Panc1 (cell line): ENCODE measurements at regions of chr5 and their contacts with region 1.

Region 1: GRCh38 chr5:79547429-79547822 is 33.5 kb upstream of the HOMER1 start:
- DNase-seq: no peak
- ATAC-seq: no peak
- H3K4me3 ChIP-seq: no peak overlapping the region
- H3K27ac ChIP-seq: no peak overlapping the region
- H3K4me1 ChIP-seq: no peaks in the 10 kb centered on the region
- H3K27me3 ChIP-seq: no peaks in the 10 kb centered on the region
- CTCF ChIP-seq: no peak

Region 2: GRCh38 chr5:79573983-79574890 is 26.8 kb after region 1 on chr5:
- CTCF ChIA-PET with region 1: no interaction called
- POLR2A ChIA-PET with region 1: no interaction called
- in situ Hi-C with region 1: no loop called
- intact Hi-C with region 1: no loop called
- DNase-seq: no peak
- ATAC-seq: no peak
- H3K4me3 ChIP-seq: no peak overlapping the region
- H3K27ac ChIP-seq: no peak overlapping the region
- H3K4me1 ChIP-seq: no peaks in the 10 kb centered on the region
- H3K27me3 ChIP-seq: no peaks in the 10 kb centered on the region
- CTCF ChIP-seq: no peak

Region 3: DNA sequence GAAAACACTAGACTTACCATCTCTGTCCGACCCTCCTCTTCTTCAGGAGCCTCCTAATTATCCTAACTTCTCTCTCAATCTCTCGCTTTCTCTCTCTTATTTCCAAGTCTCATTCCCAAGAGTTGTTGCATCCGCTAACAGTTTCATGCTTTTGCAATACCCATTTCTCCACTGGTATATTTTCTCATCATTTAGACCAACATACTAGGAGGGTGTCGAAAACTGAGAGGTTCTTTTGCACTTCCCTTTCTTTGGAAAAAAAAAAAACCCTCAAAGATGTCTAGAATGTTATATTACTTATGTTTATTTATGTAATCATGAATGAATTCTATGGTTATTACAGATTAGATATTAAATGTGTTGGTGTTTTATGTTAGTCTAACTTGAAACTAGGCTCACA is 808.3 kb after region 1 on chr5:
- CTCF ChIA-PET with region 1: no interaction called
- POLR2A ChIA-PET with region 1: interaction called, 23 read pairs
- in situ Hi-C with region 1: no loop called
- intact Hi-C with region 1: no loop called
- DNase-seq: no peak
- ATAC-seq: no peak
- H3K4me3 ChIP-seq: no peak overlapping the region
- H3K27ac ChIP-seq: no peak overlapping the region
- H3K4me1 ChIP-seq: no peaks in the 10 kb centered on the region
- H3K27me3 ChIP-seq: no peaks in the 10 kb centered on the region
- CTCF ChIP-seq: no peak